Activated naive CD4-positive, alpha-beta T cell treated with anti-CD3 and anti-CD28 coated beads, Interleukin-2, amount 10 ng/mL, durations not matched to agents 7 days and 5 days (primary cell): ENCODE measurements at regions of chr11 and their contacts with region 1.

Region 1: GRCh38 chr11:14907411-14908213 is 15.6 kb upstream of the CYP2R1 start:
- DNase-seq: peak; percentile 89
- H3K4me3 Mint-ChIP-seq: peak overlapping the region; percentile 15
- H3K27ac Mint-ChIP-seq: peak overlapping the region; percentile 45
- H3K4me1 Mint-ChIP-seq: peaks cover 54% of the 10 kb centered on the region
- H3K27me3 Mint-ChIP-seq: no peaks in the 10 kb centered on the region

Region 2: DNA sequence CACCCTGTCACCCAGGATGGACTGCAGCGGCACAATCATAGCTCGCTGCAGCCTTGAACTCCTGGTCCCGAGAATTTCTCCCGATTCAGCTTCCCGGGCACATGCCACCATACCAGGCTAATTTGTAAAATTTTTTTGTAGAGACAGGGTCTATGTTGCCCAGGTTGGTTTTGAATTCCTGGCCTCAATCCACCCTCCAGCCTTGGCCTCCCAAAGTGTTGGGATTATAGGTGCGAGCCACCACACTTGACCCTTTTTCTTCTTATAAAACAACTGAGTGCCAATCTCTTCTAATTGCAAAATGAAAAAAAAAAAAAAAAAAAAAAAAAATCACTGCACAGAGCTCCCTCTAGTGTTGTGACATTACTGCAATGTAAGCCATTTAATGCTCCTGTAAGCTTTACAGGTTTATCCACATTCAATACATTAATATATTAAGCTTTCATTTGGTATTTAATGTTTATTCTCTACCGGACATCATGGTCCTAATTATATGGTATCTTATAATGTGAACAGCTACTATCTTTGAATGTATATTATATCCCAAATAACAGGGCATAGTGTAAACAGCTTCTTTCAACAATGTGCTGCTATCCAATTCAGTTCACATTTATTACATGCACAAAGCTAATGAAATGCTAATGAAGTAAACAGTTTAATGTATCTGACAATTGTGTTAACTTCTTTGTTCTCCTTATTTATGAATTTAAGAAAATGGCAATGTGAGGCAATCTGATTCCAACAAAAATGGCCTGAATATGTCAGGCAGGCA is 452.6 kb before region 1 on chr11:
- CTCF ChIA-PET with region 1: interaction called, 10 read pairs
- DNase-seq: no peak
- H3K4me3 Mint-ChIP-seq: no peak overlapping the region
- H3K27ac Mint-ChIP-seq: no peak overlapping the region
- H3K4me1 Mint-ChIP-seq: peaks cover 2% of the 10 kb centered on the region
- H3K27me3 Mint-ChIP-seq: no peaks in the 10 kb centered on the region

Region 3: GRCh38 chr11:14623036-14623435 is 284.6 kb before region 1 on chr11:
- CTCF ChIA-PET with region 1: interaction called, 18 read pairs
- DNase-seq: no peak
- H3K4me3 Mint-ChIP-seq: no peak overlapping the region
- H3K27ac Mint-ChIP-seq: no peak overlapping the region
- H3K4me1 Mint-ChIP-seq: peaks cover 47% of the 10 kb centered on the region
- H3K27me3 Mint-ChIP-seq: no peaks in the 10 kb centered on the region

Region 4: DNA sequence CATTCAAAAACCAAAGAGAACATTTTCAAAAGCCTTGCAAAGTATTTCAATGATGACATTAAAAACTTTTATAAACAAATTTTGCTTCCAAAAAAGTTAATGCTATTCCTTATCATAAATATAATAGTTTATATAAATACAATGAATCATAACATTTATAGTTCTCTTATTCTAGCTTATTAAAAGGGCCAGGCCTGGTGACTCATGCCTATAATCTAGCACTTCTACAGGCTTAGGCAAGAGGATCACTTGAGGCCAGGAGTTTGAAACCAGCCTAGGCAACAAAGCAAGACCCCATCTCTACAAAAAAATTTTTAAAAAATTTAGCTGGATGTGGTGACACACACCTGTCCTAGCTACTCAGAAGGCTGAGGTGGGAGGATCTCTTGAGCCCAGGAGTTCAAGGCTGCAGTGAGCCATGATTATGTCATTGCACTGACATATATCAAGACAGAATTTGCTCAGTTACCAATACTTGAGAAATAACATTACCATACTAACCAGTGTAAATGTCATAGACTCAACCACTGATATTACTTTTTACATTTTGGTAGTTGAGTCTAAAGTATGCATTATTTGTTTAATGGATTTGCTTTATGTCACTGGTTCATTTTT is 72.0 kb before region 1 on chr11:
- CTCF ChIA-PET with region 1: no interaction called
- DNase-seq: no peak
- H3K4me3 Mint-ChIP-seq: no peak overlapping the region
- H3K27ac Mint-ChIP-seq: no peak overlapping the region
- H3K4me1 Mint-ChIP-seq: no peaks in the 10 kb centered on the region
- H3K27me3 Mint-ChIP-seq: no peaks in the 10 kb centered on the region

Region 5: GRCh38 chr11:14892036-14892567 is 15.5 kb before region 1 on chr11 and contains the start of gene CYP2R1:
- CTCF ChIA-PET with region 1: interaction called, 71 read pairs
- DNase-seq: peak; percentile 96
- H3K4me3 Mint-ChIP-seq: peak within 1 kb of the TSS; percentile 88
- H3K27ac Mint-ChIP-seq: peak within 1 kb of the TSS; percentile 97
- H3K4me1 Mint-ChIP-seq: peaks cover 61% of the 10 kb centered on the region
- H3K27me3 Mint-ChIP-seq: no peaks in the 10 kb centered on the region

Region 6: DNA sequence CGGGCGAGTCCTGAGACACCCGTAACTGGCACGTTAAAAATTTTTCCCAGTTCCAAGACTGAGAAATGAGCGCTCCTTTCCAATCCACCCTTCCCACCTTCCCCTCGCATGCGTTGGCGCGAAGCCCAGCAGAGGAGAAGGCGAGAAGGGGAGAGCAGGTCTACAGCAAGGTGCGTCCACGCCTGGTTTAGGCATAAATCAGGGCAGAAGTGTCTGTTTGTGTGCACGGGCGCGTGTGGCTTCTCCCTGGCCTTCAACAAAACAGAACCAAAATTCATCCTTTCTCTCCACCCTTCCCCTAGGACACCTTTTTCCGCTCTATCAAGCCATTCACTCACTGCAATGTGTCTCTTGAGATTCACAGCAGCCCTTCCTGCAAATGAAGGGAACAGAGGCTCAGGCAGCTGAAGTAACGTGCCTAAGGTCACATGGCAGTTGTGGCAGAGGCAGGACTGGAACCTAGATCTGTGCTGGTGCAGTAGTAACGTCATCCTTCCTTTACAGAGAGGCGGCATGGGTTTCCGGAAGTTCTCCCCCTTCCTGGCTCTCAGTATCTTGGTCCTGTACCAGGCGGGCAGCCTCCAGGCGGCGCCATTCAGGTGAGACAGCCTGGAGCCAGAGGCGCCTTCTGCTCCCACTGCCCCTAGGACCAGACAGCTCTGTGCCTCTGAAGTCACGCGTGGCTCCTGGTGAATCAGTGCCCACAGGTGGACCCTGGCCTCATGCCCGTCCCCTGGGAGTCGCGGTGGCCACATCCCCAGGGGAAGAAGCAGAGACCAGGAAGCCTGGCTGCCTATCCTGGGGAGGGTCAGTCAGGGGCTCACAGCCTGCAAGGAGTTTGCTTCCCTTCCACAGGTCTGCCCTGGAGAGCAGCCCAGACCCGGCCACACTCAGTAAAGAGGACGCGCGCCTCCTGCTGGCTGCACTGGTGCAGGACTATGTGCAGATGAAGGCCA is 166.9 kb after region 1 on chr11:
- CTCF ChIA-PET with region 1: interaction called, 134 read pairs
- DNase-seq: peak; percentile 90
- H3K4me3 Mint-ChIP-seq: peak overlapping the region; percentile 72
- H3K27ac Mint-ChIP-seq: no peak overlapping the region
- H3K4me1 Mint-ChIP-seq: peaks cover 23% of the 10 kb centered on the region
- H3K27me3 Mint-ChIP-seq: peaks cover 61% of the 10 kb centered on the region